AG04449 (cell line): ENCODE measurements at regions of chr3 and their contacts with region 1.

Region 1: GRCh38 chr3:107574650-107575049 is 51.9 kb downstream of the BBX start:
- DNase-seq: no peak
- H3K4me3 ChIP-seq: no peak overlapping the region
- CTCF ChIP-seq: peak; percentile 35

Region 2: GRCh38 chr3:107562969-107563529 is 11.6 kb before region 1 on chr3:
- CTCF ChIA-PET with region 1: interaction called, 17 read pairs
- POLR2A ChIA-PET with region 1: no interaction called
- DNase-seq: no peak
- H3K4me3 ChIP-seq: no peak overlapping the region
- CTCF ChIP-seq: no peak

Region 3: GRCh38 chr3:107598926-107599771 is 24.5 kb after region 1 on chr3:
- CTCF ChIA-PET with region 1: interaction called, 12 read pairs
- POLR2A ChIA-PET with region 1: no interaction called
- DNase-seq: no peak
- H3K4me3 ChIP-seq: peak overlapping the region; percentile 44
- CTCF ChIP-seq: no peak

Region 4: GRCh38 chr3:107676469-107677309 is 102.0 kb after region 1 on chr3:
- CTCF ChIA-PET with region 1: interaction called, 20 read pairs
- POLR2A ChIA-PET with region 1: no interaction called
- DNase-seq: no peak
- H3K4me3 ChIP-seq: no peak overlapping the region
- CTCF ChIP-seq: peak; percentile 29

Region 5: GRCh38 chr3:107753480-107753879 is 178.8 kb after region 1 on chr3:
- CTCF ChIA-PET with region 1: interaction called, 31 read pairs
- POLR2A ChIA-PET with region 1: no interaction called
- DNase-seq: no peak
- H3K4me3 ChIP-seq: no peak overlapping the region
- CTCF ChIP-seq: peak; percentile 60